GM10248 (cell line): ENCODE measurements at regions of chr11 and their contacts with region 1.

Region 1: GRCh38 chr11:10366568-10367370 is 61.9 kb downstream of the ADM start:
- DNase-seq: peak; percentile 70
- CTCF ChIP-seq: peak; percentile 93

Region 2: GRCh38 chr11:10298342-10298741 is 68.4 kb before region 1 on chr11:
- CTCF ChIA-PET with region 1: interaction called, 22 read pairs
- POLR2A ChIA-PET with region 1: no interaction called
- DNase-seq: peak; percentile 77
- CTCF ChIP-seq: peak; percentile 7

Region 3: DNA sequence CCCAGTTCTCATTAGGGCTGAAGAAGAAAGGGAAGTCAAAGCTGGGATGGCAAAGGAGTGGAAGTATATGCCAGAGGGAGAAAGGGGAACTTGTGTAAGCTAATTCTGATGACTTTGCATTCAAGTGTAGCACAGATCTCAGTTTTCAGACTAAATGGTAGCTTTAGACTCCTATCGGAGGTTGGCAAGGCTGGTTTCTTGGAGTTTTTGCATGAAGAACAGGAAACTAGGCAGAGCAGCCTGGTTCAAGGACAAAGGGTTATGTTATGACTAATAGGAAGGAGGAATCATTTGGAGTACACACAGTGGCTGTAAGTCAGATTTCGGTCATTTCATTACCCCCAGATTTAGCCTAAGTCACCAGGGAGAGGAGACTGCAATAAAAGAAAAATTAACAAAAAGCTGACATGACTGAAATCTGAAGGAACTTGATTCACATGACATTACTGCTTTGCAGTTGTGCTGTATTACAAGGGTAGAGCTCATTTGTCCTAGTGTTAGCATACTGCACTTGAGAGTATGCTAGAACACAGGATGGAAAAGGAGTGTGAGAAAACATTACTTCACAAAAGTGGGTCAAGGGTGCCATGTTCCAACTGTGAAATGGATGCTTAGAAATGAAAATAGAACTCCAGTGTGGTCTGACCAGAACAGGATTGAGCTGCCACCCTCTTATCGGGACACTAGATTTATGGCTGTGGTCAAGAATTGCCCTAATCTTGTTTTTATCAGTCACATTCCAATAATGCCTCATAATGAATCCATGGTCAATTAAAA is 38.3 kb before region 1 on chr11:
- CTCF ChIA-PET with region 1: interaction called, 25 read pairs
- POLR2A ChIA-PET with region 1: no interaction called
- DNase-seq: no peak
- CTCF ChIP-seq: no peak

Region 4: DNA sequence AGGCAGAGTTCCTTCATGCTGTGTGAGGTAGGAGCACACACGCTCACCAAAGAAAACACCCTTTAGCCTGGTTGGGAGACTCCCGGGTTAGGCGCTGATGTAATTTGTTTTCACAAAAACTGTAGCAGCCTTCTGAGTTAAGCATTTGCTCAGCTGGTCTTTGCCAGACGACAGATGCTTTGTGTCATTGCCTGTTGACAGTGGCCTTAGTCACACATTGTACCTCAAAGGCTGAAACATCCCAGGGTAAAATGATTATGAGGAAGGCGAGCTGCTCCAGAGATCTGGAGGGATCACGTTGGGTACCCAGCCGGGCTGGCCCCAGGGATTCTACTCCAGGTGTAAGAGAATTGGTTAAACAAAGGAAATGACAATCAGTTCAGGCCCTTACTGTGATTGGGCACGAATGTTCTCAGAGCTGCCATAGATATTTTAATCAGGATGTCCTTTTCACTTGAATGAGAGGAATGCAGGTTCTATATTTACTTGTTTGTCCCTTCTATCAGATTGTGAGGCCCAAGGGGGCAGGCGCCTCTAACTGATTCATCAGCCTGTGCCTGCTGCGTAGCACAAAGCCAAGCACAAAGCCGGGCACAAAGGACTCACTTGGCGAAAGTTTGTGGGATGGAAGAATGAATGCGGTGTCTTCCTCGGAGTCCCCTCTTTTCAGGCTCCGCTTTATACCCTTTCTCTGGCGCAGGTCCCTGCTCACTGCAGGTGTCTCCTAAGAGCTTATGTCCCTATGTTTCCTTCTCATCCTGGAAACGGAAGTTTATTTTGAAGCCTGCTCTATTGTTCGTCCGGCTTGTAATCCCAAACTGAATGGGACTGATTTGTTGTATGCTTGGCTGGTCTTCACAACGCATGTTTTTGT is 14.8 kb before region 1 on chr11:
- CTCF ChIA-PET with region 1: interaction called, 19 read pairs
- POLR2A ChIA-PET with region 1: interaction called, 3 read pairs
- DNase-seq: no peak
- CTCF ChIP-seq: no peak

Region 5: DNA sequence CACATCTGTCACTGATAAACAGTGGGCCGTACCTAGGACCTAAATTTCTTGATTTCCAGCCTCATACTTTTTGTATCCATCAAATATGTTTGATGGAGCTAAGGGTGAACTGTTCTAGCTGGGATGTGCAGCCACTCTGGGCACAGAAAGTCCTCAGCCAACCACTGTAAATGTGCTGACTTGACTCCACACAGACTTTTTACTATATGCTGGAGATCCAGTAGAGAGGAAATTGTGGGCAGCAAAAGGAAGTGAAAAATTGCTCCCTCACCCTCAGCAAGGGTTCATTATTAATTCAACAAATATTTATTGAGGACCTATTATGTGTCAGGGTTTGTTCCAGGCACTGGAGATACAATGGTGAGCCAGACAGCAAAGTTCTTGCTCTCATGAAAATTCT is 34.1 kb after region 1 on chr11:
- CTCF ChIA-PET with region 1: interaction called, 11 read pairs
- POLR2A ChIA-PET with region 1: no interaction called
- DNase-seq: no peak
- CTCF ChIP-seq: no peak